Motor neuron (in vitro differentiated cells): ENCODE measurements at regions of chr10 and their contacts with region 1.

Region 1: GRCh38 chr10:132939957-132940790 is 2.2 kb downstream of the CFAP46 start:
- ATAC-seq: peak; percentile 46 to 69 (median 60)
- H3K4me3 ChIP-seq: no peak overlapping the region
- H3K27ac ChIP-seq: no peak overlapping the region
- H3K4me1 ChIP-seq: peaks cover 0 to 9% of the 10 kb centered on the region in 2 donors

Region 2: DNA sequence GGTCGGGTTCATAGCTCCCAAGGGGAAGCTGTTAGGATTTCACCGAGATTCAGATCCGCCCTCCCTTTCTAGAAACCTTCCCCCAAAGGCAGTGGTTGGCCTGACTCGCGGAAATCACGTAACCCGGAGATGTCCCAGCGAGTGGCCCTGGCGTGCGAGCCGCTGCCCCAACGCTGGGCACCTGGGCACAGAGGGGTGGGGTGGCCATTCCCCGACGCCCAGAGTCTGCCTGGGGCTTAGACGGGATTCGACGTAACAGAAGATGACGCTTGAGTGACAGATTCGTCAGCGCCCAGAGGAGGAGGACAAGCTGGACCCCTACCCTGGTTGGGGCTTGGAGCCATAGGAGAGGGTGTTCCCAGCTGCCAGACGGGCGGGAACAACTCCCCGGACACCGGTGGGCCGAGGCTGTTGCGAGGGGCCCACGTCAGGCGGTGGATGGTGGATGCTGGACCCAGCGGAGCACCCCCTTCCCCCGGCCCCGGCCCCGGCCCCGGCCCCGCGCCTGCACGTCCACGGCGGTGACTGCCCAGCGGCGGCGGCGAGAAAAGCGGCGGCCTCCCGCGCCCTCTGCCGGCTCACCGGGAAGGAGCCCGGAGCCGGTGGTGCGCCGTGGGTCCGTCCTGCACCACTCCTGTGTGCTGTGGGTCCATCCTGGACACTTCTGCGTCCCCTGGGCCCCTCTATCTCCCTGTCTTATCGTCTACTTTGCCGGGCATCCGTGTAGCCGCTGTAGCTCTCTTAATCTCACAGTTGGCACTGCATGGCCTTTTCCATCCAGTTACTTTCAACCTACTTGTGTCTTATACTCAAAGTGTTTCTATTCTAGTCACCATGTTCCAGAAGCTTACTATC is 184.4 kb after region 1 on chr10:
- in situ Hi-C with region 1: loop called in 5 of 9 experiments (anchors 10 to 25 kb)
- ATAC-seq: peak in 7 of 8 experiments; percentile 75 to 93 (median 86)
- H3K4me3 ChIP-seq: no peak overlapping the region
- H3K27ac ChIP-seq: no peak overlapping the region
- H3K4me1 ChIP-seq: peaks cover 4 to 5% of the 10 kb centered on the region in 2 donors

Region 3: GRCh38 chr10:133278577-133279265 is 338.5 kb after region 1 on chr10:
- in situ Hi-C with region 1: loop called in 1 of 9 experiments (anchors 25 kb)
- ATAC-seq: peak; percentile 56 to 87 (median 77)
- H3K4me3 ChIP-seq: no peak overlapping the region
- H3K27ac ChIP-seq: peak overlapping the region in 1 of 2 donors; percentile 78
- H3K4me1 ChIP-seq: peaks cover 21 to 54% of the 10 kb centered on the region in 2 donors